Dendritic cell treated with granulocyte-macrophage colony-stimulating factor and Interleukin-4, amounts not matched to agents 40 ng/mL and 50 ng/mL, for 4 days (primary cell): ENCODE measurements at regions of chr1 and their contacts with region 1.

Region 1: DNA sequence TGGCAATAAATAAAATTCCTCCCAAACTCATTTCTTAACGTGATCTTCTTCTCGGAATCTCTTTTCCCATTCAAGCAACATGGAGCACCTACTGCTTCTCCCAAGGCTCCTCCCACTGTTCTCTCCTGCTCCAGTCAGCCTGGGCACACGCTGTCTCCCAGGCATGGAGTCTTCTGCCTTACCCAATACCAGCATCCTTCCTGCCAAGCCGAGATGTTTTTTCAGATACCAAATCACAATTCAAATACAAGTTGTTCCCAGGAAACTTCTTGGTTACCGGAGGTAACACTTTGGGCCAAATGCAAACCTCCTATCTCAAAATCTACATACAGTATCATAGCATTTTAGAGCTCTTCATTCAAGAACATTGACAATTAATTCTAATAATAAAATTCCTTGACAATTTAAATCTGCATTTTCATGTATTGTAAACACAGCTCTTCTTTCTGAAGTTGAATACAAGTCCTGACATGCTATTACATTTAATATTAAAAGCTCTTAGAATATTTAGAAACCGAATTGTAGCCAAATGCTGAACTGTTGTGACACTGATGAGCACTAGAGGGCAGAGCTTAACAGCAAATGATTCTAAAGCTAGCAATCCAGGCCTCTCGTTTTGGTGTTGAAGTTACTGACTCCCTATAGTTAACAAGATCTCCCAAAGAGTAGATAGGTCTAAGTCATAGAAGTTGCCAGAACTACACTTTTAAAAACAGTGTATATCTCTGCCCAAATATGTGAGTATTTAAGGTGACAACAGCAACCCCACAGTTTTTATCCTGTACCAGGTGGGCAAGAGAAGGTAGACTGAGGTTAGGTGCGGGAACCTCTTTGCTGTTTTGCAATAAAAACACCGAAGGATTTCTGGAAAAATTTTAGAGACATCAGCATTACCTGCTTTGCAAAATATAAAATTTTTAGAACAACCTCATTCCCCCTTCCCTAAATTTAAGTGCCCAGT is 52.3 kb downstream of the BCAR3 start:
- H3K4me3 Mint-ChIP-seq: no peak overlapping the region
- H3K27ac Mint-ChIP-seq: peak overlapping the region; percentile 71
- H3K4me1 Mint-ChIP-seq: peaks cover 23% of the 10 kb centered on the region
- H3K27me3 Mint-ChIP-seq: no peaks in the 10 kb centered on the region

Region 2: GRCh38 chr1:93437976-93438605 is 191.3 kb before region 1 on chr1:
- intact Hi-C with region 1: loop called (anchors 2 kb)
- H3K4me3 Mint-ChIP-seq: no peak overlapping the region
- H3K27ac Mint-ChIP-seq: no peak overlapping the region
- H3K4me1 Mint-ChIP-seq: peaks cover 6% of the 10 kb centered on the region
- H3K27me3 Mint-ChIP-seq: peaks cover 10% of the 10 kb centered on the region

Region 3: DNA sequence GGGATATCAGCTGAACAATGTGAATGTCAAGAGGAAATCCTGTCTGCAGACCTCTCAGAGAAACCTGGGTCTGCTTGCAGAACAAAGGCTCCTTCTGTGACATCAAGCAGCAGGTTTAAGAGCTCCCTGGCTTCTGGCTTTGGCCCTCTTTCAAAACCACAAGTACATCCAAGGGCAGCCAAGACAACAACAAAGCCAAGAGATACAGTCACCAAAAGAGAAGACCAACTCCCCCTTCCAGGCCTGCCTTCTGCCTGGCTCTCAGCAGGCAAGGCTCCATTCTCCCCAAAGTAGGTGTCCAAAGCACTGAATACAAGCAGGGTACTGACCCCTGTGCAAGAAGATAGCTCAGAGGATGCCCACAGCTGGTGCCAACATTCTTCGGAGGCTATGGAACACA is 40.8 kb after region 1 on chr1:
- intact Hi-C with region 1: loop called (anchors 2 kb)
- H3K4me3 Mint-ChIP-seq: no peak overlapping the region
- H3K27ac Mint-ChIP-seq: peak overlapping the region; percentile 15
- H3K4me1 Mint-ChIP-seq: peaks cover 59% of the 10 kb centered on the region
- H3K27me3 Mint-ChIP-seq: no peaks in the 10 kb centered on the region

Region 4: DNA sequence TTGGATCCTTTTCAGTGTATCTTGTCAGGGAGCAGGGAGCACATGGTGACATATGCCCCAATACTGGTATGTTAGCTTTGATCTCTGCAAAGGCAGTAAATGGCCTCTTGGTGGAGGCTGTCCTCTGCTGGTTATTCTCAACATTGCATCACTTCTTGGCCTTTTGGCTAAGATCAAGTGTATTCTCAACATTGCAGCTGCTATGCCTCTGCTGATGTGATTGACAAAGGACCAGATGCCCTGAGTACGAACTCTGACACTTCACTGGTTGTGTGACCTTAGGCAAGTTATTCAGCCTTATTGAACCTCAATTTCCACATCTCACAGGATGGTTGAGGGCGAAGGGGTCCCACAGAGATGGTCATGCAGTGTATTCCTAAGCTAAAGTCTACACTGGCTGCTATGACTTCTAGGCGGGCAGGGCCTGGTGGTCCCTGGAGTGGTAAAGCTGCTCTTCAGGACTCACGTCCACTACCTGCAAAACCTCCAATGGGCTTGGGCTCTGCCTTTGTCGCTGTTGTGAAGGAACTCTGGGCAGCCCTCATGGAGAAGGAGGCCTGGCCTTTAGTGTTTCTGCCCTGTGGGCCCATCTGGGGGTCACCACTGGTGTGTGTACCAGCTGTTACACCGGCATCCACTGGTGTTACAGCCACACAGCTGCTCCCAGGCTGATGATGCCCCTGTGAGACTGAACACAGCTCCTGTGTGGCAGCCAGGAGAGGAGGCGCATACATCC is 184.8 kb after region 1 on chr1:
- intact Hi-C with region 1: loop called (anchors 1 kb)
- H3K4me3 Mint-ChIP-seq: no peak overlapping the region
- H3K27ac Mint-ChIP-seq: no peak overlapping the region
- H3K4me1 Mint-ChIP-seq: peaks cover 52% of the 10 kb centered on the region
- H3K27me3 Mint-ChIP-seq: no peaks in the 10 kb centered on the region

Region 5: DNA sequence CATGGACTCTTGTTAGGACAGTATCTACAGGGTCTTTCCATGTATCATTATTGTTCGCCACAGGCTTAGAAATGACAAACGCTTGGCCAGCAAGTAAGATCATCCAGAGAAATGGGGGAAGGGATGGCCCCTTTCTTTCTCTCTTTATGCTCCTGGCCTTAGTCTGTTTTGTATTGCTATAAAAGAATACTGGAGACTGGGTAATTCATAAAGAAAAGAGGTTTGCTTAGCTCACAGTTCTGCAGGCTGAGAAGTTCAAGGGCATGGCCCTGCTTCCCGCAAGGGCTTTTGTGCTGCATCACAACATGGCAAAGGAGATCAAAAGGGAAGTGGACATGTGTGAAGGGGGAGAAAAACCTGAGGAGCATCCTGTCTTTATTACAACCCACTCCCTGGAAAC is 208.6 kb after region 1 on chr1:
- intact Hi-C with region 1: no loop called
- H3K4me3 Mint-ChIP-seq: no peak overlapping the region
- H3K27ac Mint-ChIP-seq: no peak overlapping the region
- H3K4me1 Mint-ChIP-seq: peaks cover 26% of the 10 kb centered on the region
- H3K27me3 Mint-ChIP-seq: no peaks in the 10 kb centered on the region